Activated CD4-positive, alpha-beta T cell treated with anti-CD3 and anti-CD28 coated beads, Interleukin-2, amount 10 ng/mL, durations not matched to agents 24 days and 14 days (primary cell): ENCODE measurements at regions of chr15 and their contacts with region 1.

Region 1: GRCh38 chr15:79596051-79596507 is 163.9 kb downstream of the MINAR1 start:
- DNase-seq: peak; percentile 88
- H3K4me3 Mint-ChIP-seq: no peak overlapping the region
- H3K27ac Mint-ChIP-seq: no peak overlapping the region
- H3K4me1 Mint-ChIP-seq: peaks cover 4% of the 10 kb centered on the region
- H3K27me3 Mint-ChIP-seq: peaks cover 16% of the 10 kb centered on the region

Region 2: GRCh38 chr15:79339564-79340314 is 256.3 kb before region 1 on chr15:
- intact Hi-C with region 1: loop called (anchors 5 kb)
- DNase-seq: no peak
- H3K4me3 Mint-ChIP-seq: no peak overlapping the region
- H3K27ac Mint-ChIP-seq: no peak overlapping the region
- H3K4me1 Mint-ChIP-seq: no peaks in the 10 kb centered on the region
- H3K27me3 Mint-ChIP-seq: no peaks in the 10 kb centered on the region

Region 3: GRCh38 chr15:79380755-79381497 is 215.2 kb before region 1 on chr15:
- intact Hi-C with region 1: loop called (anchors 1 kb)
- DNase-seq: peak; percentile 91
- H3K4me3 Mint-ChIP-seq: no peak overlapping the region
- H3K27ac Mint-ChIP-seq: no peak overlapping the region
- H3K4me1 Mint-ChIP-seq: no peaks in the 10 kb centered on the region
- H3K27me3 Mint-ChIP-seq: no peaks in the 10 kb centered on the region